Naive thymus-derived CD8-positive, alpha-beta T cell (primary cell): ENCODE measurements at regions of chr2 and their contacts with region 1.

Region 1: DNA sequence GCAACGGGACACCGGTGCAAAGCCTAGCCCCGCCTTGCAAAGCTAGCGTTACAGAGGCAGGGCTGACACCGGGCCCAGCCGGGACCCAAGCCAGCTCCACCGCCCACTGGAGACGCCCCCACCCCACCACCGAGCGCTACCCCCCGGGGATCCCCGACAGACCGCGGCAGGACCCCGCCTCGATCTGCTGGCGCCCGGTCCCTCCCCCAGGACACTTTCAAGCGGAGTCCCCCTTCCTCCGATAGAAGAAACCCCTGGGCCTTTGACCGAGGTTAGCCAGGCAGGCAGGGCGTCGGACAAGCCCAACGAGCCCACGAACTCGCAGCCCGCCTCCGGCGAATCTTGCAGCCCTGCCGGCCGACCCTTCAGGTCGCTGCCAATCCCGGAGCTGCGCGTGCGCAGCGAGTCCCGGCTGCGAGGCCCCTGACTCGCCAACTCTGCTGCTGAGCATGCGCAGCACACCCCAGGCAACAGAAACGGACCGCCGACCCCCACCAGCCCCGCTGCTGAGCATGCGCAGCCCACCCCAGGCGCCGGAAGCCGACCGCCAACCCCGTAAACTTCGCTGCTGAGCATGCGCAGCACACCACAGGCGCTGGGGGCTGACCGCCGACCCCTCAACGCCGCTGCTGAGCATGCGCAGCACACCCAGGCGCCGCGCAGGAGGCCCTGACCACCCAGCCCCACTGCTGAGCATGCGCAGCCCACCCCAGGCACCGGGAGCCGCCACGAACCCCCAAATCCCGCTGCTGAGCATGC is 656 bp downstream of the ADI1 start:
- DNase-seq: peak; percentile 94 to 100 (median 99)
- ATAC-seq: peak; percentile 74 to 77
- H3K4me3 Mint-ChIP-seq: peak overlapping the region; percentile 90 to 98 (median 94)
- H3K27ac Mint-ChIP-seq: peak overlapping the region; percentile 65 to 98 (median 93)
- H3K4me1 Mint-ChIP-seq: peaks cover 27 to 47% (median 41%) of the 10 kb centered on the region in 4 donors
- H3K27me3 Mint-ChIP-seq: peaks cover 0 to 4% (median 0%) of the 10 kb centered on the region in 5 donors

Region 2: DNA sequence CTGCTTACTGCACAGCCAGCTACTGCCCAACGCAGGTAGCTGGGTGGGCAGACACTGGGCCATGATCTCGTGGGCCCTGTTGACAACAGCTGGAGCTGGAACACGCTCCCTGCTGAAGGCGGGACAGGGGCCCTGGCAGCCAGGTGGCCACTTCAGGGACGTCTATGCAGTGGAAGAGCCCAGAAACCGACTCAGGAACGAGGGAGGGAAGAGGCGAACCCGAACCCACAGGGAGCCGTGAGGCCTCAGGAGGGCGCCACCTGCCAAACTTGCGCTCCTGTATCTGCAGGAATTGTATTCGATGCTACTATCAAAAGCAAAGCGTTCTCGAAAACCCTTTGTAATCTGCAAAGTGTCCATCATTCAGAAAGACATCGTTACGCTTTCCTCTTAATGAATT is 339.5 kb before region 1 on chr2:
- POLR2A ChIA-PET with region 1: no interaction called
- DNase-seq: peak in 1 of 10 donors; percentile 46
- ATAC-seq: no peak
- H3K4me3 Mint-ChIP-seq: no peak overlapping the region
- H3K27ac Mint-ChIP-seq: peak overlapping the region in 4 of 10 donors; percentile 20 to 67 (median 40)
- H3K4me1 Mint-ChIP-seq: peaks cover 0 to 8% (median 0%) of the 10 kb centered on the region in 4 donors
- H3K27me3 Mint-ChIP-seq: no peaks in the 10 kb centered on the region

Region 3: GRCh38 chr2:3413642-3414493 is 104.8 kb before region 1 on chr2:
- POLR2A ChIA-PET with region 1: no interaction called
- DNase-seq: no peak
- ATAC-seq: no peak
- H3K4me3 Mint-ChIP-seq: no peak overlapping the region
- H3K27ac Mint-ChIP-seq: peak overlapping the region in 5 of 10 donors; percentile 9 to 66 (median 21)
- H3K4me1 Mint-ChIP-seq: peaks cover 7 to 40% (median 15%) of the 10 kb centered on the region in 4 donors
- H3K27me3 Mint-ChIP-seq: no peaks in the 10 kb centered on the region

Region 4: DNA sequence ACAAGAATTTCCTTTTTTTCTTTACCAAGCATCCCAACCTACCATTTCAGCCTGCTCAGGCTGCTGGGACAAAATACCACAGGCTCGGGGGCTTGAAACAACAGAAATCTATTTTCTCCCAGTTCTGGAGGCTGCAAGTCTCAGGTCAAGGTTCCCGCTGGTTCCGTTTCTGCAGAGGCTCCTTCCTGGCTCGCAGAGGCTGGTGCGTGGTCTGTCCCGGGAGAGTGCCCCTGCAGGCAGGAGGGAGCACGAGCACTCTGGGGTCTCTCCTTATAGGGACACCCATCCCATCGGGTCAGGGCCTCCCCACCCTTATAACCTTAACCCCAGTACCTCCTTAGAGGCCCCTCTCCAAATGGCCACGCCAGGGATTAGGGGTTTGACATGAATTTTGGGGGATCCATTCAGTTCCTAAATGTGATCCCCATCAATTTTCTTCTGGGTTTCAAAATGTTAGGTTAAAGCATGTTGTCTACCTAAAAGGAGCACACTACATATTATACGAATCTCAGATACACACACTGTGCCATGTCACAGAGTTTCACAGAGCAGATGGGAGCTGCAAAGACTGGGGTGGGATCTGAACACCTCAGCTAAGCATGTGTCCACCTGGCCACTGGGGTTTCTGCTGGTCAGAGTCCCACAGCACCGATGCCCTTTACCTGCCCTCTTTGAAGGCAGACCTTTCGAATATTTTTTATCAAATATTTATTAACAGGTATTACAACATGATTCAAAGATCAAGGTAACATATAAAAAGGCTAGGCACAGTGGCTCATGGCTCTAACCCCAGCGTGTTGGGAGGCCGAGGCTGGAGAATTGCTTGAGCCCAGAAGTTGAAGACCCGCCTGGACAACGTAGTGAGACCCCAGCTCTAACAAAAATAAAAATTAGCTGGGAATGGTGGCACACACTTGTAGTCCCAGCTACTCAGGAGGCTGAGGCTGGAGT is 18.3 kb after region 1 on chr2:
- POLR2A ChIA-PET with region 1: interaction called, 10 read pairs
- DNase-seq: peak in 5 of 10 donors; percentile 7 to 25 (median 20)
- ATAC-seq: peak; percentile 88 to 91
- H3K4me3 Mint-ChIP-seq: peak overlapping the region; percentile 76 to 91 (median 84)
- H3K27ac Mint-ChIP-seq: peak overlapping the region in 9 of 10 donors; percentile 73 to 91 (median 83)
- H3K4me1 Mint-ChIP-seq: peaks cover 2 to 13% (median 7%) of the 10 kb centered on the region in 4 donors
- H3K27me3 Mint-ChIP-seq: no peaks in the 10 kb centered on the region

Region 5: DNA sequence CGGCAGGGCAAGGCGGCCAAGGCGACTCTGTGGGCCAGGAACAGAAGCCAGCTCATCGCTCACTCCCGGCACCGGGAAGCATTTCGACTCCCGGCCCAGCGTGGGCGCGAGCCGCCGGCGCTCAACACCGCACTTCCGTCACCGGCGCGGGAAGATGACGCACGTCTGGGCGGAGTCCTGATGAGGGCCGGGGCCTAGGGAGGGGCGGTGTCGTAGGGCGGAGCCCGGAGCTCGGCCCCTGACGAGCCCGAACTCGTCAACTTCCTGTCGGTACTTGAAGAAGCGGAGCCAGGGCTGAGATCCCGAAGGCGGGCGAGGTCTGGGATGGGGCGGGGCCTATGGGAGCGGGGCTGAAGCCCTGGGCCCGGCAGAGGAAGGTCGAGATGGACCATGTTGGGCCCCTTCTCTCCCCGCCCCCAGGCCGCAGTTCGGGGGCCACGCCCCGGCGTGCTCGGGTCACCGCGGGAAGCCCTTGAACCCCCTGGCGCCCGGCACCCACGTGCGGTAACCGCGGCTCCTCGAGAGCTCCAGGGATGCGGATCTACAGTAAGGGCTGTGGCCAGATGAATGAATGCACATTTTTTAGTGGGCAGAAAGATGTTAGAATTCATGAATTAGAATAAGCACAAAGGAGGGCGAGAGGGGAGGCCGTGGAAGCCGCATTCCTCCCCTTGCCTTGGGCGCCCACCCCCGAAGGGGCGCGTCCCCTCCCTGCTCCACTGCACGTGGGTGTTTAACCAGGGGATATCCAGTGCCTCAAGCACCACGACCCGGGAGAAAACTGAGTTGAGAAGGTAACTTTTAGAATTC is 39.7 kb after region 1 on chr2 and contains the start of gene RNASEH1:
- POLR2A ChIA-PET with region 1: interaction called, 81 read pairs
- DNase-seq: peak; percentile 95 to 99 (median 98)
- ATAC-seq: peak; percentile 93 to 95
- H3K4me3 Mint-ChIP-seq: peak within 1 kb of the TSS; percentile 86 to 95 (median 92)
- H3K27ac Mint-ChIP-seq: peak within 1 kb of the TSS; percentile 87 to 98 (median 97)
- H3K4me1 Mint-ChIP-seq: peaks cover 8 to 42% (median 34%) of the 10 kb centered on the region in 4 donors
- H3K27me3 Mint-ChIP-seq: no peaks in the 10 kb centered on the region
- polyA plus RNA-seq, gene RNASEH1: 35.4 to 47.0 (median 35.5) TPM